WTC11 (cell line): ENCODE measurements at regions of chr1 and their contacts with region 1.

Region 1: DNA sequence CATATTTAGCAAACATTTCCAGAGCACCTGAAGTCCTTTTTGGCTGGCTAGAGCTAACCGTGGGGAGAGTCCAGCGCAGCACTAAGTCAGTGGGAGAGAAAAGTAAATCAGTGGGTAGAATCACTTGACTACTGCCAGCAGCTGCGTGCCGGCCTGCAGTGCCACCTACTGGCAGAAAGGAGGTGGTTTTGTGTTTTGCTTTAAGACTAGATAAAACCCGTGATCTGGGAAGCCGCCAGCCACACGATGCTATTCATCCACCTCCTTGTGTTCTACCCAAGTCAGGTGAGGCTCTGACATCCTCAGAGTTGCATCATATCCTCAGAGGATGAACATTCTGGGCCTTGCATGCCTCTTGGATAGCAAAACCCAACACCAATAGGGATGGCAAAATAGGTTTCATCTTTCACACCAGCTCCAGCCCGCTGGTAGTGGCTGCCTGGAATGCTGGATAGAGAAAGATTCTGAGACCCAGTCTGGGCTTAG is 14.1 kb upstream of the HEYL start:
- DNase-seq: peak; percentile 83
- ATAC-seq: peak; percentile 64
- H3K4me3 Mint-ChIP-seq: no peak overlapping the region
- H3K27ac Mint-ChIP-seq: no peak overlapping the region
- H3K4me1 Mint-ChIP-seq: peaks cover 5% of the 10 kb centered on the region
- H3K27me3 Mint-ChIP-seq: peaks cover 71% of the 10 kb centered on the region
- CTCF ChIP-seq: peak; percentile 67

Region 2: DNA sequence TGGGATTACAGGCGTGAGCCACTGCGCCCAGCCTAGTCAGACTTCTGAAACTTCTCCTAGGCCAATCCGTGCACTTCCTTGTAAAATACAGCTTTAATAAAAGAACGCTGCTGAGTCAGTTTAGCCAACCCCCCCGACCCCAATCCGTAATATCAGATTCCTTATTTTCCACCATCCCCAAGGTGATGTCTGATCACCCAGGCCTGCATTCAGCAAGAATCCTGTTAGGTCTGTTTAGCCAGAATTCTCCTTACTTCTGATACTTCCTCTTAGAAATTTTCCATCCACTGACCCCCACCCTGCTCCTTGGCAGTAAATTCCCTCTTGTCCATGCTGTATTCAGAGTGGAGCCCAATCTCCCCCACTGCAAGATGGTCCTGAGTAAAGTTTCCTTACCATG is 65.5 kb before region 1 on chr1:
- CTCF ChIA-PET with region 1: interaction called, 10 read pairs
- POLR2A ChIA-PET with region 1: no interaction called
- DNase-seq: no peak
- ATAC-seq: no peak
- H3K4me3 Mint-ChIP-seq: no peak overlapping the region
- H3K27ac Mint-ChIP-seq: no peak overlapping the region
- H3K4me1 Mint-ChIP-seq: peaks cover 9% of the 10 kb centered on the region
- H3K27me3 Mint-ChIP-seq: peaks cover 40% of the 10 kb centered on the region
- CTCF ChIP-seq: no peak

Region 3: GRCh38 chr1:39632682-39633417 is 20.7 kb before region 1 on chr1:
- CTCF ChIA-PET with region 1: interaction called, 18 read pairs
- POLR2A ChIA-PET with region 1: no interaction called
- DNase-seq: peak; percentile 79
- ATAC-seq: peak; percentile 89
- H3K4me3 Mint-ChIP-seq: peak overlapping the region; percentile 65
- H3K27ac Mint-ChIP-seq: no peak overlapping the region
- H3K4me1 Mint-ChIP-seq: peaks cover 21% of the 10 kb centered on the region
- H3K27me3 Mint-ChIP-seq: peaks cover 89% of the 10 kb centered on the region
- CTCF ChIP-seq: no peak

Region 4: DNA sequence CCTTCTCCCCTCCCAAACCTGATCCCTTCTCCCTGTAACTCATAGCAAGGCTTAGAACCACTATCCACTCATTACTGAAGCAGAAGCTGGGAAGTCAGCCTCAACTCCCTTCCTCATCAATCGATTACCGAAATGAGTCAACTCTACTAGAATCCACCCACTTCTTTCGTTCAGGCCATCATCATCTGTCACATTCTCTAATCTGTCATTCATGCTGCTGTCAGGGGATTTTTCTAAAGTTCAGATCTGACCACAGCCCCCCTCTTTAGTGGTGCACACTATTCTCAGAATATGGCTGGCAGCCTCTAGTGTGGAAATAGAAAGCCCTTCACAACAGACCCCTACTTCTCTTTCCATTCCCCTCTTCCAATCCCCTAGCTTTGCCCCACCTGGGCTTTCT is 13.2 kb after region 1 on chr1:
- CTCF ChIA-PET with region 1: interaction called, 90 read pairs
- POLR2A ChIA-PET with region 1: interaction called, 6 read pairs
- DNase-seq: no peak
- ATAC-seq: no peak
- H3K4me3 Mint-ChIP-seq: no peak overlapping the region
- H3K27ac Mint-ChIP-seq: no peak overlapping the region
- H3K4me1 Mint-ChIP-seq: no peaks in the 10 kb centered on the region
- H3K27me3 Mint-ChIP-seq: peaks cover 100% of the 10 kb centered on the region
- CTCF ChIP-seq: no peak

Region 5: DNA sequence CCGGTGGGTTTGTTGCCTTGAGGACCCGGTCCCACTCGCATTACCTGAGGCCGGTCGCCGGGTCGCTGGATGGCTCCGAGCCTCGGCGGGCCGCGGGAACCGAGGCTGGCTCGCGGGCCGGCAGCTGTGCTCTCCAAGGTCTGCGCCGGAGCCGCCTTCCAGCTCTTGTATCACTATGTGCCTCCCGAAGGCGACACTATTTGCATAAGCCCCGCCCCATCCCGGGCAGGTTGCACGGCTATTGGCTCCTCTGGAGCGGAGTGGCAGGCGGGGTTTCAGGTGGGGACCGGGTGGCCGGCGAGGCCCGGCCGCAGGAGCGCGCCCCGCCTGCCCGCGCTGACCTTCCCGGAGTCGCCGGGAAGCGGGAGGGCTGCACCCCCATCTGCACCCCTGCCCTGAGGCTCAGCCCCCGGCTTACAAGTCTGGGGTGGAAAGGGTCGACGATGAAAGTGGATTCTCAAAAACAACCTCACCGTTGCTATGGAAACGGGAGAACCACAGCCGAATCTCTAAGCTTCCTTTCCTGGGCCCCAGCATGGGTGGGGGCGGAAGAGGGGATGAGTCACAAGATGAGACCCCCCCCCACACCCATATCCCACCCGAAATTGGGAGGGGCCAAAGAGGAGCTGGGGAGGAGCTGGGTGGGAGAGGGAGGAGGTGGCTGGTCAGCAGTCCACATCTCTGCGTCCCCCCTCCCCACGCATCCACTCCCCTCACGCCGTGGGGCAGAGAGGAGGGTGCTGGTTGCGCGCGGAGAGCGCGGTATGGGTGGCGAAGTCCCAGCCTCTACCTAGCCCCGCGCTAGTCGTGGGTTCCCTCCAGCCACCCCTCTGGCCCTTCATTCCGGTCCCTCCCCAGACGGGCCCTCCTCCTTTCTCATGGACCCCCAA is 37.9 kb after region 1 on chr1 and contains the start of gene HPCAL4:
- CTCF ChIA-PET with region 1: interaction called, 17 read pairs
- POLR2A ChIA-PET with region 1: no interaction called
- DNase-seq: peak; percentile 98
- ATAC-seq: peak; percentile 98
- H3K4me3 Mint-ChIP-seq: peak within 1 kb of the TSS; percentile 59
- H3K27ac Mint-ChIP-seq: no peak within 1 kb of the TSS
- H3K4me1 Mint-ChIP-seq: peaks cover 4% of the 10 kb centered on the region
- H3K27me3 Mint-ChIP-seq: peaks cover 100% of the 10 kb centered on the region
- CTCF ChIP-seq: no peak
- total RNA-seq, gene HPCAL4: 0.50 to 0.80 TPM (median 0.60 TPM) in 3 replicates

Region 6: GRCh38 chr1:39711104-39711965 is 57.7 kb after region 1 on chr1:
- CTCF ChIA-PET with region 1: interaction called, 17 read pairs
- POLR2A ChIA-PET with region 1: no interaction called
- DNase-seq: no peak
- ATAC-seq: peak; percentile 17; the same call in 1 of the 2 replicates
- H3K4me3 Mint-ChIP-seq: no peak overlapping the region
- H3K27ac Mint-ChIP-seq: no peak overlapping the region
- H3K4me1 Mint-ChIP-seq: peaks cover 12% of the 10 kb centered on the region
- H3K27me3 Mint-ChIP-seq: peaks cover 100% of the 10 kb centered on the region
- CTCF ChIP-seq: no peak

Region 7: GRCh38 chr1:39738622-39739366 is 85.2 kb after region 1 on chr1 and contains the start of gene PPIE:
- CTCF ChIA-PET with region 1: interaction called, 17 read pairs
- POLR2A ChIA-PET with region 1: no interaction called
- DNase-seq: peak; percentile 92
- ATAC-seq: peak; percentile 98
- H3K4me3 Mint-ChIP-seq: peak within 1 kb of the TSS; percentile 89
- H3K27ac Mint-ChIP-seq: peak within 1 kb of the TSS; percentile 66; the same call in 1 of the 2 replicates
- H3K4me1 Mint-ChIP-seq: peaks cover 13% of the 10 kb centered on the region
- H3K27me3 Mint-ChIP-seq: peaks cover 48% of the 10 kb centered on the region
- CTCF ChIP-seq: no peak
- total RNA-seq, gene PPIE: 42.5 to 50.7 TPM (median 48.9 TPM) in 3 replicates